HCT116 (cell line): ENCODE measurements at regions of chr3 and their contacts with region 1.

Region 1: DNA sequence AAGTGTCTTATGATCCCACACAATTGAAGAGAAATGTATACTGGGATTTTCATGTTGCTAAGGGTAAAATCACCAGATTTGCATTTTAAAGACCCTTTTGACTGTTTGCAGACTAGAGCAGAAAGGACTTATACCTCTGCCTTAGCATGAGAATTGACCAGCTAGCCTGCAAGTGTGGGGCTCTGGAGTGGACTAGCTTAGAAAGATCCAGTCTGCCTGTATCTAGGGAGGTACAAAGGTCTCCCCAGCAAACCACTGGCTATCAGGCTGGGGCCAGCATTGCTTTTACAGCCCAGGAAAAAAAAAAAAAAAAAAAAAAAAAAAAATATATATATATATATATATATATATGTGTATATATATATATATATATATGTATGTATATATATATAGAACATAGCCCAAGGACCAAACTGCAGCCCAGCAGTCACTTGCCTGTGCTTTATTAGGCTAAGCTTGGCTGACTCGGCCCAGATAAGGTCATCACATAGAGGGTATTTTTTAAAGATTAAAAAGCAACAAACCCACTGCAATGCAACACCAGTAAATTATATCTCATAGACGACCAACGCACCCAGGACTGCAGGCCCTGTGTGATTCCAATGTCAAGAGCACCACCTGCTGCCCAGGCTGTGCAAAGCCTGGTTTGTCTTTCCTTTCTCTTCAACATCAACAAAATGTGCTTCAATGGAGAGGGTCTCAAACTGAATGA is 63.7 kb downstream of the DCLK3 start:
- DNase-seq: peak; percentile 33
- ATAC-seq: peak; percentile 95
- H3K4me3 ChIP-seq: no peak overlapping the region
- H3K27ac ChIP-seq: no peak overlapping the region
- H3K4me1 ChIP-seq: peaks cover 0 to 4% of the 10 kb centered on the region in 2 experiments; a peak in 1 of 4 replicates
- H3K27me3 ChIP-seq: no peaks in the 10 kb centered on the region
- CTCF ChIP-seq: peak; percentile 61 to 82 (median 81); a peak in 5 of 6 replicates
- POLR2A ChIP-seq: no peak
- RAD21 ChIP-seq: peak; percentile 92

Region 2: DNA sequence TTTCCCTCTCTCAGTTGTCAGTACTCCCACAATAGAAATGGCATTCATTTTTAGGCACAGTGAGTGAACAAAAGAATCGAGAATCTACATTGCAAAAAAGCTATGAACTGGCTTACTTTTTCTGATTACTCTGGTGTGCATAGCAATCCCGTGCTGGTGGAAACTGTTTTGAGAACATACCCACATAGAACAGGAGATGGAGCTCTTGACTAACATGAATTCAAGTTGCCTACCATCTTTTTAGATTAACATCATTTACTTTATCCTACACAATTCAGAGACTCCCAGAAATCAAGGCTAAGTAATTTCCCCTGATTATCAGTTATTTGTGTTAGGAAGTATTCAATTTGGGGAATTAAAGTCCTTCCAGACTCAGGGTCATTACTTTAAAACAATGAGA is 734.8 kb before region 1 on chr3:
- CTCF ChIA-PET with region 1: no interaction called
- POLR2A ChIA-PET with region 1: no interaction called
- RAD21 ChIA-PET with region 1: no interaction called
- intact Hi-C with region 1: loop called (anchors 2 kb)
- DNase-seq: no peak
- ATAC-seq: no peak
- H3K4me3 ChIP-seq: no peak overlapping the region
- H3K27ac ChIP-seq: no peak overlapping the region
- H3K4me1 ChIP-seq: no peaks in the 10 kb centered on the region
- H3K27me3 ChIP-seq: no peaks in the 10 kb centered on the region
- CTCF ChIP-seq: 0 out of 6 replicates have a peak, but pooled peaks of 2 of the 3 experiments have one; percentile 8 to 25
- POLR2A ChIP-seq: no peak
- RAD21 ChIP-seq: peak; percentile 35; the same call in 1 of the 2 replicates

Region 3: DNA sequence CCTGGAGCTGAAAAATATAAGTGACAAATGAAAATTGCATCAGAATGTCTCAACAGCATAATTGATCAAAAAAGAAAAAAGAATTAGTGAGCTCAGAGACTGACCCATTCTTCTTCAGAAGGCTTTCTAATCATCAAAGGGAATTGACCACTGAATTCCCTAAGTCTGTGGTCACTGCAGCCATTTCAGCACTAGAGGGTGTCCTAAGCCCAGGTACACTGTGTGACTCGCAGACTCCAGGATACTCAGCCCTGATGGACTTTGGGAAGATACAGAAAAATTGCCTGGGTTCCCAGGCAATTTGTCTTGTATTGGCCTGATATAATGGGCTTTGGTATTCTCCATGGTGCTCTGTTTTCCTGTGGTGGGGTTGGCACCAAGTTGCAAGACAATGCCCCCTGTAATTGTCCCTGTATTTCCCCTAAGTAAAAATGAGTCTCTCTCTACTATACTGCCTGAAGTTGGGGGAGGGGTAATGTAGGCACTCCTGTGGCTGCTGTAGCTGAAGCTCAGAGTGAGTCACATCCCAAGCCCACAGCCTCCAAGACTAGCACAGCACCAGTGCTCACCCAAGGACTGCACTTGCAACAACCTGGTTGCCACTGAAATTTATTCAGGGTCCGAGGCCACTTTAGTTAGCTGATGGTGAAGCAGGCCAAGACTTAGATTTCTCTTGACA is 576.4 kb before region 1 on chr3:
- CTCF ChIA-PET with region 1: no interaction called
- POLR2A ChIA-PET with region 1: no interaction called
- RAD21 ChIA-PET with region 1: no interaction called
- intact Hi-C with region 1: loop called (anchors 1 kb)
- DNase-seq: peak; percentile 4
- ATAC-seq: peak; percentile 50; the same call in 1 of the 2 replicates
- H3K4me3 ChIP-seq: no peak overlapping the region
- H3K27ac ChIP-seq: no peak overlapping the region
- H3K4me1 ChIP-seq: no peaks in the 10 kb centered on the region
- H3K27me3 ChIP-seq: no peaks in the 10 kb centered on the region
- CTCF ChIP-seq: peak; percentile 13 to 48 (median 34); a peak in 3 of 6 replicates
- POLR2A ChIP-seq: no peak
- RAD21 ChIP-seq: peak; percentile 40

Region 4: GRCh38 chr3:36591959-36592358 is 108.7 kb before region 1 on chr3:
- CTCF ChIA-PET with region 1: no interaction called
- POLR2A ChIA-PET with region 1: no interaction called
- RAD21 ChIA-PET with region 1: no interaction called
- intact Hi-C with region 1: loop called (anchors 5 kb)
- DNase-seq: no peak
- ATAC-seq: no peak
- H3K4me3 ChIP-seq: no peak overlapping the region
- H3K27ac ChIP-seq: no peak overlapping the region
- H3K4me1 ChIP-seq: no peaks in the 10 kb centered on the region
- H3K27me3 ChIP-seq: peaks cover 8% of the 10 kb centered on the region
- CTCF ChIP-seq: peak in 2 of 3 experiments; percentile 5 to 24; a peak in 2 of 6 replicates
- POLR2A ChIP-seq: no peak
- RAD21 ChIP-seq: peak; percentile 30; the same call in 1 of the 2 replicates

Region 5: DNA sequence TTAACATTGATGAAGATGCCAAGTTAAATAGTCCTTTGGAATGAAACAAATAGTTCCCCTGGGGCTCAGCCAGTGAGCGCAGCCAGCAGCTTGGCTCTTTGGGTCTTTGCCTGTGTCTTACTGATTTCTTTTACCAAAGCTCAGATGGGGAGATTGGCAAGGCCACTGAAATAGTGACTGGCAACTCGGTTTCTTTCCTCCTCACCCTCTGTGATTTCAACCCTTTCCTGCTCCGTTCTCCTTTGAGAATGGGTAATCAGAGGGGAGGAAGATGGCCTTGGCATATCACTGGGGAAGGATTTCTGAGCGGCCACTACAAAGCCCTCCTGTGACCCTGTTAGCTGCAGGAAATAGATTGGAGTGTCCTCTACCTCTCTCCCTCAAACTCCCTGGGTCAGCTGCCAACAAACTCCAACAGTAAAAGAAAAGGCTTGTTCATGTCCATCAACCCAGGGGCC is 810.8 kb after region 1 on chr3:
- CTCF ChIA-PET with region 1: no interaction called
- POLR2A ChIA-PET with region 1: no interaction called
- RAD21 ChIA-PET with region 1: no interaction called
- intact Hi-C with region 1: no loop called
- DNase-seq: no peak
- ATAC-seq: no peak
- H3K4me3 ChIP-seq: no peak overlapping the region
- H3K27ac ChIP-seq: no peak overlapping the region
- H3K4me1 ChIP-seq: no peaks in the 10 kb centered on the region
- H3K27me3 ChIP-seq: peaks cover 11% of the 10 kb centered on the region; the same call in 1 of the 2 replicates
- CTCF ChIP-seq: no peak
- POLR2A ChIP-seq: no peak
- RAD21 ChIP-seq: no peak